Sciatic nerve (tissue), 2 donors: ENCODE measurements at regions of chr2 and their contacts with region 1.

Region 1: DNA sequence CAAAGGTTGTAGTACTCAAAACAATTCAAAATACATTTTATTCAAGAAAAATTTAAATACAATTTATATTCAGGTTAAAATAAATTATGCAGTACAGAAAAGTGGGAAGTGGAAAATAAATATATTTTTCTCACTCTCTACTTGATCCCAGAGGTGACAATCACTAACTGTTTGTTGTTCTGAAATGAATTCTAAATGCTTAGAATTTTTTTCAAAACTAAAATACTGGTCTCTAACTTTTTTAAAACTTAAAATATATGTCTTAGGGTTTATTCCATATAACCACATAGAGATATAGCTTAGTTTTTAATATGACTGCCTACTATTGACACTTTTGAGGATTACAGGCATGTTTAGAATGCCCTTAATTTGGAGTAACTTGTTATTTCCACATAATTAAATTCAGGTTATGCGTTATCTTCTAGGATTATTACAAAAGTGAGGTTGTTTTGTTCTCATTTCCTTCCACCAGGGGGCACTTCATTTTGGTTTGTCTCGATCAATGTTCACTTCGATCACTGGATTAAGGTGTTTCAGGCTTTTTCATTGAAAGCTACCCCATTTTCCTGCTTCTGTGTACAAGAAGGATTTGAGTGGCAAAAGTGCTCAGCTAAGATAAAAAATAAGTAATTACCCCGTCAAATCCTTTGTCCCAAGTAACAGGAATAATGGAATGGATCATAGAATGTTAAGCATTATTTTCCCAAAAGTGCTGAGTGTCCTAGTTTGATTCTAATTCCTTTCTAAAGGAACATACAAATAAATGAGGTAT is 27.1 kb upstream of the TFPI start:
- DNase-seq: no peak
- ATAC-seq: peak; percentile 64

Region 2: DNA sequence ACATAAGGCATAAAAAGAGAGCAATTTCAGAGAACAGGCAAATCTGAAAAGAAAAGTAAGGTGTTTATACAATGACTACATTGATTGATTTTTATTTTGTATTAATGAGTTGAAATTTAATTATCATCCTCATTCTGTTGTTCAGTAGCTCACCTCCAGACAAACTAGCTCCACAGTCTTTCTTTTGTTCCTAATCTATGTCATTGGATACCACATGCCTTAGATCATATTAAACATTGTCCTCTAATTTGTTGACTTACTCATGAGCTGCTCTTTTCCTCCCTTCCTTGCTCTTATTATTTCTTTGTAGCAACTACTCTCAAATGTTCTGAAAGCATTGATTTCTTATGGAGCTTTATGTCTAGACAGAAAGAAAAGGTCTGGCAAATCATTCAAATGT is 546.9 kb before region 1 on chr2:
- intact Hi-C with region 1: no loop called
- DNase-seq: no peak
- ATAC-seq: no peak

Region 3: DNA sequence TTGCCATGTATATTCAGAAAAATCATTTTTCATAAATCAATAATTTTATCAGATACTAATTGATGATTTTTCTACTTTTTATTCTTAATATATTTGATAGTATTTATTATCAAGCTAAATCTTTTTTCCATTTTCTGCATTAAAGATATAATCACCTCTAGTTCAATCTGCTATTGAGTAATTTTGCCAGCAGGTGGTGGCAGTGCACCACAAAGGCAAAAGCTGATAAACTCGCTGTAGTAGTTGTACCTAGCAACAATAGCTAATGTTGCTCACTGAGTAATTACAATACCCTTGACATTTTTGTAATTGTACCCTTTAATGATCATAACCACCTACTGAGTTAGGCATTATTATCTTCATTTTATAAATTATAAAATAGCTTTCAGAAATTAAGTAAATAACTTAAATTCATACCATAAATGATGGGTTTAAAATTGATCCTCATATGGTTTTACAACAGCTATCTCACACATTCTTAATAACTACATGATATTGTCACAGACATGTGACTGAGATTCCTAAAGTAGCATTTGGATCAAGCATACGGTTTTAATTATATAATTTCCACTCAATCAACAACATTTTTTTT is 81.3 kb before region 1 on chr2:
- intact Hi-C with region 1: loop called (anchors 5 kb)
- DNase-seq: peak; percentile 65
- ATAC-seq: peak; percentile 89